Activated naive CD4-positive, alpha-beta T cell treated with anti-CD3 and anti-CD28 coated beads for 36 hours (primary cell): ENCODE measurements at regions of chr5 and their contacts with region 1.

Region 1: DNA sequence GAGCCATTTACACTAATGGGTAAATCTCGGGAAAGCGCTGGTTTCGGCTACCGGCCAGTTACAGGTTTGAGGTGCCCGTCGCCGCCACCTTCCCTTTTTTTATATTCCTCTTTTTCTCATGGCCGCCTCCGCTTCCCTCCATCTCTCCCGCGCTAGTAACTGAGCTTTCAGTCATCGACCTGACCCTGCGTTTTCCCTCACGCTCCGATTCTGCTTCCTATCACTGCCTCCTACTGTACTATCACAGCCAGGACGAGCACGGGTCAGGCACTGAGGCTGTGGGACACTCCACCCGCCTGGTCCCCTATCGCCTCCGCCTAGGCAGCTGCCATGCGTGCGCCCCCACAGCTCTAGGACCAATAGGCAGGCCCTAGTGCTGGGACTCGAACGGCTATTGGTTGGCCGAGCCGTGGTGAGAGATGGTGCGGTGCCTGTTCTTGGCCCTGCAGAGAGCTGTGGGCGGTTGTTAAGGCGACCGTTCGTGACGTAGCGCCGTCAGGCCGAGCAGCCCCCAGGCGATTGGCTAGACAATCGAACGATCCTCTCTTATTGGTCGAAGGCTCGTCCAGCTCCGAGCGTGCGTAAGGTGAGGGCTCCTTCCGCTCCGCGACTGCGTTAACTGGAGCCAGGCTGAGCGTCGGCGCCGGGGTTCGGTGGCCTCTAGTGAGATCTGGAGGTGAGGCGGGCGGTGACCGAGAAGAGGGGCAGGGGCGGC is at the start of gene HMGCR:
- DNase-seq: peak; percentile 99
- H3K4me3 Mint-ChIP-seq: no peak within 1 kb of the TSS
- H3K27ac Mint-ChIP-seq: no peak within 1 kb of the TSS
- H3K4me1 Mint-ChIP-seq: peaks cover 35% of the 10 kb centered on the region
- H3K27me3 Mint-ChIP-seq: no peaks in the 10 kb centered on the region
- total RNA-seq, gene HMGCR: 61.7 to 67.5 TPM

Region 2: DNA sequence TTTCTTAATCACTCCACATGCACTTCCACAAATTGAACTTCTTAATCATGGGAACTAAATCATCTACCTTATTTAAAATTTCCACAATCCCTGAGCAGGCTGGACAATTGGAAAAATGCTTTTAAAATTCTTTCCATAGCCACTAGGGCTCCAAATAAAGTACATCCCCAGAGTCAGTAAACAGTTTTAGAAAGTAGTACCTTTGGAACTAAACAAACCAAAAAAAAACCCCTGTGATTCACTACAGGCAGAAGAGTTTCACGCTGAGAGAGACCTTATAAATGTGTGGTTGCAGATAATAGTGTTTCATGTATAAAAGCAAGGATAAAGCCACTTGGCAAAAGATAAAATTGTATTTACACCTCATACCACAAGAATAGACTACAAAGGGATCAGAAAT is 11.6 kb before region 1 on chr5:
- CTCF ChIA-PET with region 1: interaction called, 4 read pairs
- intact Hi-C with region 1: loop called (anchors 1 kb)
- DNase-seq: no peak
- H3K4me3 Mint-ChIP-seq: no peak overlapping the region
- H3K27ac Mint-ChIP-seq: peak overlapping the region; percentile 48
- H3K4me1 Mint-ChIP-seq: peaks cover 21% of the 10 kb centered on the region
- H3K27me3 Mint-ChIP-seq: no peaks in the 10 kb centered on the region

Region 3: DNA sequence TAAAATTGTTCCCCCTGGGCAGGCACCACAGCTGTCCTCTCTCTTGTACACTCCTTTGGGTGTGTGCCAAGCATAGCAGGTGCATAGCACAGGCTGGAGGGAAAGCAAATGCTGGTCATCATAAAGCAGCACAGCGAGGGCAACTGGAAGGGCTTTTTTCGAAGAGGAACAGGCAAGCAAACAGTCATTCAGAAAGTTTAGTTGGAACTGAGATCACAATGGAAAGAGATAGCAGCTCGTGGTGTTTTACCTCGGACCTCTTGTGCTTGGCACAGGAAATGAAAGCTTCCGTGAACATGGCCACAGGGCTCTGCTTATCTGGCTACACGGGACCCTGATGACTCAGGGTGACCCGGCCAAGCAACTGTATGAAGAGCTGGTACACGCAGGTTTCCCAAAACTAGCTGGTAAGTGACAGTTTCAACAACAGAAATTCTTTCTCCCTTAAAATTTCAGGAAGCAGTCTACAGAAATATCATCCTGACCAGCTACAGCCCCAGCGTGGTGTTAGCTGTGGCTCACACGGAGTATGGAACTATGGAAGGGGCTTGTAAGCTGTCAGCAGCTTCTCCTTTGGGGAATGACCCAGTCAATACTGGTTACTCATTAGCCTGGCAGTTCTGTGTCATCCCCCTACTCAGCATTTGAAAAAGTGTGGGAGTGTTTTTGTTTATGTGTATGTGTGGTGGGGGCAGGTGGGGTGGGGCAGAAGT is 332.4 kb after region 1 on chr5:
- CTCF ChIA-PET with region 1: no interaction called
- intact Hi-C with region 1: loop called (anchors 2 kb)
- DNase-seq: peak; percentile 82
- H3K4me3 Mint-ChIP-seq: peak overlapping the region; percentile 49
- H3K27ac Mint-ChIP-seq: peak overlapping the region; percentile 70
- H3K4me1 Mint-ChIP-seq: peaks cover 30% of the 10 kb centered on the region
- H3K27me3 Mint-ChIP-seq: no peaks in the 10 kb centered on the region

Region 4: GRCh38 chr5:77282337-77283027 is 1945.7 kb after region 1 on chr5:
- CTCF ChIA-PET with region 1: no interaction called
- intact Hi-C with region 1: no loop called
- DNase-seq: no peak
- H3K4me3 Mint-ChIP-seq: no peak overlapping the region
- H3K27ac Mint-ChIP-seq: no peak overlapping the region
- H3K4me1 Mint-ChIP-seq: peaks cover 13% of the 10 kb centered on the region
- H3K27me3 Mint-ChIP-seq: no peaks in the 10 kb centered on the region